PC-3 (cell line): ENCODE measurements at regions of chr4 and their contacts with region 1.

Region 1: DNA sequence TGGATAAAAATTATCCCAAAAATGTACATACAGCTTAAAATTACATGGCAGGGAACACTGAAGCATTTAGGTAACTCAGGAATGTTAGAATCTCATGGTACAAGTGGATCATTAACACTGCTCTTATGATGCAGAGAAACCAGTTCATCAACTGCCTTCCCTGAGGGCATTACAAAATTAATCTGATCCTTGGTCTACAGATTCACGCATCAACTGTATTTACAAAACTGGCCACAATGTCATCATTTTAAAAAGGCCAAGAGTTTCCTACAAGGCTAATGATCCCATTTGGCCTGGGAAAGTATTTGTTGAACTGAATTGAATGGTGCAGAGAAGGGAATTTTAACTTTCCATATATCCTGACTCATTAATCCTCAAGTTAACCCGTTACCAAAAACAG is 84.6 kb downstream of the TSPAN5 start:
- DNase-seq: peak; percentile 93
- ATAC-seq: peak; percentile 37
- H3K4me3 ChIP-seq: no peak overlapping the region
- H3K27ac ChIP-seq: peak overlapping the region; percentile 100
- H3K4me1 ChIP-seq: peaks cover 53% of the 10 kb centered on the region
- H3K27me3 ChIP-seq: no peaks in the 10 kb centered on the region
- CTCF ChIP-seq: no peak

Region 2: GRCh38 chr4:98482847-98483806 is 90.7 kb before region 1 on chr4:
- CTCF ChIA-PET with region 1: no interaction called
- POLR2A ChIA-PET with region 1: no interaction called
- intact Hi-C with region 1: loop called (anchors 10 kb)
- DNase-seq: peak; percentile 82
- ATAC-seq: peak; percentile 68
- H3K4me3 ChIP-seq: peak overlapping the region; percentile 58
- H3K27ac ChIP-seq: peak overlapping the region; percentile 97
- H3K4me1 ChIP-seq: peaks cover 61% of the 10 kb centered on the region
- H3K27me3 ChIP-seq: no peaks in the 10 kb centered on the region
- CTCF ChIP-seq: no peak

Region 3: GRCh38 chr4:98522636-98523395 is 51.0 kb before region 1 on chr4:
- CTCF ChIA-PET with region 1: no interaction called
- POLR2A ChIA-PET with region 1: no interaction called
- intact Hi-C with region 1: loop called (anchors 5 kb)
- DNase-seq: peak; percentile 74
- ATAC-seq: peak; percentile 92
- H3K4me3 ChIP-seq: no peak overlapping the region; the same call in 1 of the 2 replicates
- H3K27ac ChIP-seq: peak overlapping the region; percentile 85
- H3K4me1 ChIP-seq: peaks cover 37% of the 10 kb centered on the region
- H3K27me3 ChIP-seq: no peaks in the 10 kb centered on the region
- CTCF ChIP-seq: no peak

Region 4: GRCh38 chr4:98584265-98584664 is 10.5 kb after region 1 on chr4:
- CTCF ChIA-PET with region 1: no interaction called
- POLR2A ChIA-PET with region 1: no interaction called
- intact Hi-C with region 1: loop called (anchors 1 kb)
- DNase-seq: peak; percentile 78
- ATAC-seq: peak; percentile 94
- H3K4me3 ChIP-seq: no peak overlapping the region
- H3K27ac ChIP-seq: peak overlapping the region; percentile 100
- H3K4me1 ChIP-seq: peaks cover 47% of the 10 kb centered on the region
- H3K27me3 ChIP-seq: no peaks in the 10 kb centered on the region
- CTCF ChIP-seq: no peak